HCT116 (cell line): ENCODE measurements at regions of chr15 and their contacts with region 1.

Region 1: DNA sequence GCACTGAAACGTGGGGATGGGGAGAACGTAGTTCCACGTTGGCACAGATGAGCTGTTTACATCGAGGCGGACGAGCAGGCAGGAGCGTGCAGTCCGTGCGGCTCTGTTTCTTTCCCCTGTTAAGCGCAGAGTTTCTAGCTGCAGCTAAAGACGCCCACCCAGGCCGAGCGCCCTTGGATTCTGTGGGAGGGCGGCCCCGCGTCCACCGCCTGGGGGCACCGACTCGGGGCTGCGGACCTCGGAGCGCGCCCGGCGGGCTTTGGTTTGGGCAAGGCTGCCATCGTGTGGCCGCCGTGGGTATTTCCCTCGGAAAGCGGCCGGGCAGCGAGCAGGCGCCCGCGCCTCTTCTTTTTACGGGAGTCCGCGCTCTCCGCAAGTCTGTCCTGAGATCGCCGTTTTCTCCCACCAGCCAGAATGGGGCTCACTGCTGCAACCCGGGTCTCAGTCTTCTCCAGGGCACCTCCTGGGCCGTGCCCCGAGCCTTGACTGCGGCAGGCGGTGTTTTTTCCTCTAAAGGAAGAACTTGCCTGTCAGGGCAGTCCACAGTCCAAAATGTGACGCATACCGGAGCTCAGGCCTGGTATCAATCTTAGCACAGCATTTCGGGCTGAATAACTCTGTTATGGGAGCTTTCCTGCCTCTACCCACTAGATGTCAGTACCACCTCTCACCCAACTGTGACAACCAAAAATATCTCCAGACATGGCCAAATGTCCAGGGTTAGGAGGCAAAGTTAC is 219.9 kb upstream of the IGF1R start:
- DNase-seq: peak; percentile 48
- ATAC-seq: peak; percentile 92
- H3K4me3 ChIP-seq: peak overlapping the region; percentile 43 to 52
- H3K27ac ChIP-seq: no peak overlapping the region
- H3K4me1 ChIP-seq: peaks cover 2 to 10% of the 10 kb centered on the region in 2 experiments; a peak in 1 of 4 replicates
- H3K27me3 ChIP-seq: peaks cover 5% of the 10 kb centered on the region; the same call in 1 of the 2 replicates
- CTCF ChIP-seq: peak; percentile 53 to 68 (median 55)
- POLR2A ChIP-seq: no peak
- RAD21 ChIP-seq: peak; percentile 63

Region 2: DNA sequence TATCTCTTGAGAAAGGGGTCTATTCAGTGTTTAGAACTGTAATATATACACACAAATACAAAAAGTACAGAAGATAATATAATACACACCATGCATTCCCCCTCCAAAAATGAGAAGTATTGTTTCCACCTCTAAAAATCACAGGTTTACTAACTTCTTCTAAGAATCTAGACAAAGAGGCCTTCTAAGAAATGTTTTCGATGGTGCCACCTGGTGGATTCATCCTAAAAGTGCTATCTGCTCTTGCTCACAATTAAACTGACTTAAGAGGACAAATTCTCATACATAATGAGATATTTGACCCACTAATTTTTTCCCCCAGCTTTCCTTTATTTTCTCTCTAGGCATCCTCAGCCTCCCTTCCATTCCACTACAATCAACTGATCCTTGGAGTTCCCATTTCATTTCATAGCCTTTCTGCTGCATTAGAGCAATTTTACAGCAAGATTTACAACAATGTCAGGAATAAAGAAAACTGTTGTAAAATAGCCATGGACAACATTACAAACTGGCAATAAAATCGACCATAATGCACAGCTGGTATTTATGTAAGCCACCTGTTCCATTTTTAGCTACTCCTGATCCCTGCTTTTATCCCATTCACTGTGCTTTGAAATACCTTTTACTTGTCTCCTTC is 343.3 kb before region 1 on chr15:
- CTCF ChIA-PET with region 1: no interaction called
- POLR2A ChIA-PET with region 1: no interaction called
- RAD21 ChIA-PET with region 1: no interaction called
- intact Hi-C with region 1: loop called (anchors 10 kb)
- DNase-seq: peak; percentile 56
- ATAC-seq: no peak
- H3K4me3 ChIP-seq: no peak overlapping the region
- H3K27ac ChIP-seq: no peak overlapping the region
- H3K4me1 ChIP-seq: no peaks in the 10 kb centered on the region
- H3K27me3 ChIP-seq: no peaks in the 10 kb centered on the region
- CTCF ChIP-seq: peak; percentile 54 to 67 (median 58); a peak in 5 of 6 replicates
- POLR2A ChIP-seq: no peak
- RAD21 ChIP-seq: peak; percentile 64

Region 3: DNA sequence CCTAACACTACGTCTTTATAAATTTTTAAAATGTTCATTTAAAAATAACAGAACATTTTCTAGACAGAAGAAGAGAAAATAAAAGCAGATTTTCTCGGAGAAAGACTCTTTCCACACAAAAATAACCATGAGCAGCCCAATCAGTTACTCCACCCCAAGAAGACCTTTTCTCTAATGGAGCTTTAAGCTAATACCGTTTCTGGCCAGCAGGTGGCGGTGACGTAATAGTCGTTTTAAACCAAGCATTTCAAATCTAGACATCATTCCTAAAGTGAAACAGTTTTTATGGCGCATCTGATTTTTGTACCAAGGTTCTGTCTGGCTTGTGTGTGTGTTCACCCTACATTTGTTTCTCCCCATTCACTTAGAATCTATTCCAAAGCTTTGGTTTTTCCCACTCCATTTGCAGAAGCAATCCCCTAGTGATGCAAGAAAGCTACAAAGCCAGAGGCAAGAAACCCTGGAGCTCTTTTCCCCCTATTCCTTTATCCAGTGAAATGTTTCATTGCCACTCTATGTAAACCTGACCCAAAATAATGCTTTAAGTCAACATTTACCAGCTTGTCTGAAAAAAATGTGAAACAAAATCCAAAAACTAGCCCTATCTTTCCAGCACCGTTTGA is 116.7 kb before region 1 on chr15:
- CTCF ChIA-PET with region 1: interaction called, 30 read pairs
- POLR2A ChIA-PET with region 1: no interaction called
- RAD21 ChIA-PET with region 1: no interaction called
- intact Hi-C with region 1: loop called (anchors 2 kb)
- DNase-seq: peak; percentile 48
- ATAC-seq: peak; percentile 77
- H3K4me3 ChIP-seq: no peak overlapping the region
- H3K27ac ChIP-seq: no peak overlapping the region
- H3K4me1 ChIP-seq: no peaks in the 10 kb centered on the region
- H3K27me3 ChIP-seq: peaks cover 9% of the 10 kb centered on the region
- CTCF ChIP-seq: peak; percentile 64 to 84 (median 64); a peak in 5 of 6 replicates
- POLR2A ChIP-seq: no peak
- RAD21 ChIP-seq: peak; percentile 64